Activated CD4-positive, alpha-beta memory T cell treated with anti-CD3 and anti-CD28 coated beads, Interleukin-2, amount 10 ng/mL, durations not matched to agents 7 days and 5 days (primary cell): ENCODE measurements at regions of chr21 and their contacts with region 1.

Region 1: GRCh38 chr21:28884976-28885852 is 107.5 kb downstream of the LTN1 start:
- DNase-seq: peak; percentile 95
- H3K4me3 Mint-ChIP-seq: peak overlapping the region; percentile 82
- H3K27ac Mint-ChIP-seq: peak overlapping the region; percentile 99
- H3K4me1 Mint-ChIP-seq: peaks cover 20% of the 10 kb centered on the region
- H3K27me3 Mint-ChIP-seq: peaks cover 10% of the 10 kb centered on the region

Region 2: GRCh38 chr21:28832013-28832714 is 53.0 kb before region 1 on chr21:
- CTCF ChIA-PET with region 1: interaction called, 9 read pairs
- POLR2A ChIA-PET with region 1: interaction called, 31 read pairs
- DNase-seq: peak; percentile 25
- H3K4me3 Mint-ChIP-seq: peak overlapping the region; percentile 29
- H3K27ac Mint-ChIP-seq: peak overlapping the region; percentile 96
- H3K4me1 Mint-ChIP-seq: peaks cover 58% of the 10 kb centered on the region
- H3K27me3 Mint-ChIP-seq: no peaks in the 10 kb centered on the region